ENCODE measurements at regions of chr2 and their contacts with region 1.

Region 1: DNA sequence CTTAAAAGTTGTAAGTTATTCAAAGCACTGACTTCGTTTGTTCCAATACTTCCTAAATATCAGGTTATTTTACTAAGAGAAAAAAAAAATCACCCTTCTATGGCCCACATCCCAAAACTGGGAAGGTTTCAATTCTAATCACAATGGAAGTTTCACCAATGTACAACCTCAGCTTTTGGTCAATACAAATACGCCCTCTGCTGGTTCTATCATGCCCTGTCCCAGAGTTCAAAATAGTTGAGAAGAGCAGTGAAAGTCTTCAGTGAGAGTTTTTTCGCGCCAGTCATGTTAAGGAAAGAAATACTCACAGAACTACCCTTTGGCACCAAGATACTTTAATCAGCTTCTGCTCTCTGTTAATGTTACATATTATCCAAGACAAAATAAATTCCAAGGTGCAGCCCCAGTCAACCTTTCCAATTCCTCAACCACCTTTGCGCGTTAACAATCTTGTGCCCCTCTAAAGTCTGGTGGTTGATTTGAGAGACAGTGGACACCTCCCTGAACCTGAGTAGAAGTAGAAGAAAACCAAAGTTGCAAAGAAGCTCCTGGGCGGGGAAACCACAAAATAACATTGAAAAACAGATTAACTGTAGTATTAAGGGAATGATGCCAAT is 59.9 kb downstream of the SUMO1 start:
- DNase-seq: peak; percentile 50
- ATAC-seq: peak; percentile 94
- H3K4me3 ChIP-seq: no peak overlapping the region
- H3K27ac ChIP-seq: no peak overlapping the region
- H3K4me1 ChIP-seq: no peaks in the 10 kb centered on the region
- H3K27me3 ChIP-seq: no peaks in the 10 kb centered on the region
- CTCF ChIP-seq: peak; percentile 77 to 92 (median 89)
- POLR2A ChIP-seq: no peak
- RAD21 ChIP-seq: peak; percentile 93

Region 2: DNA sequence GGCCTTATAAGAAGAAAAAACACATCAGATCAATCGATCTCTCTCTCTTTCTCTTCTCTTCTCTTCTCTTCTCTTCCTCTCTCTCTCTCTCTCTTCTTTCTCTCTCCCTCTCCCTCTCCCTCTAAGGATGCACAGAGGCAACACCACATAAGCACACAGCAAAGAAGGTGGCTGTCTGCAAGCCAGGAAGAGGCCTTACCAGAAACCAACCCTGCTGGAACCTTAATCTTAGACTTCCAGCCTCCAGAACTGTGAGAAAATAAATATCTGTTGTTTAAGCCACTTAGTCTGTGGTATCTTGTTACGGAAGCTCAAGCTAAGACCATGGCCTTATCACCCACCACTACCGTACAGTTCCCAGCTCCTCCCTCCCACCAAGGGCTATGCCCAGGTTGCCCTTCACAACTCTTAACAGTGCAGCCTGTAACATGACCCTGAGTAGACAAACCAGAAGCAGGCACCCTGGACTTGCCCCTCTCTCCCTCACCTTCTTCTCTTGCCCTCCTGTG is 510.0 kb before region 1 on chr2:
- CTCF ChIA-PET with region 1: no interaction called
- POLR2A ChIA-PET with region 1: no interaction called
- RAD21 ChIA-PET with region 1: no interaction called
- intact Hi-C with region 1: loop called (anchors 5 kb)
- DNase-seq: no peak
- ATAC-seq: no peak
- H3K4me3 ChIP-seq: no peak overlapping the region
- H3K27ac ChIP-seq: no peak overlapping the region
- H3K4me1 ChIP-seq: no peaks in the 10 kb centered on the region
- H3K27me3 ChIP-seq: no peaks in the 10 kb centered on the region
- CTCF ChIP-seq: no peak
- POLR2A ChIP-seq: no peak
- RAD21 ChIP-seq: no peak

Region 3: DNA sequence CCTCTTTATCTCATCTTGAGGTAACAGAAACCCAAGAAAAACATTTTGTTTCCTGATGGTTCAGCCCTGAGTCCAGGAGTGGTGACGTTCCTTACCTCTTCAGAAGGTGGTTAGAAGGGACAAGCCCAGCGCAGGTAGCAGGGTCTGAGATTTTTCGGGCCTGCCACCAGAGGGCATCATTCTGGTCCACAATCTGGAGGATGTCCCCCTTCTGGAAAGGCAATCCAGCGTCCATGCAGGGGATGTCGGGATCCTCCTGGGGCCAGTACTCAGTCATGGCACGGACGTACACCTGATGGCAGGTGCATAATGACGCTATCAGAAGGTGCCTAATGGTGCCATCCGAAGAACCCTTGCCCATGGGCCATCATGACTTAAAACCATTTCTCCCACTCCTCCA is 497.7 kb before region 1 on chr2:
- CTCF ChIA-PET with region 1: no interaction called
- POLR2A ChIA-PET with region 1: no interaction called
- RAD21 ChIA-PET with region 1: no interaction called
- intact Hi-C with region 1: loop called (anchors 5 kb)
- DNase-seq: peak; percentile 60
- ATAC-seq: peak; percentile 100
- H3K4me3 ChIP-seq: no peak overlapping the region
- H3K27ac ChIP-seq: no peak overlapping the region
- H3K4me1 ChIP-seq: no peaks in the 10 kb centered on the region
- H3K27me3 ChIP-seq: no peaks in the 10 kb centered on the region
- CTCF ChIP-seq: peak; percentile 84 to 85 (median 85)
- POLR2A ChIP-seq: no peak
- RAD21 ChIP-seq: peak; percentile 51

Region 4: DNA sequence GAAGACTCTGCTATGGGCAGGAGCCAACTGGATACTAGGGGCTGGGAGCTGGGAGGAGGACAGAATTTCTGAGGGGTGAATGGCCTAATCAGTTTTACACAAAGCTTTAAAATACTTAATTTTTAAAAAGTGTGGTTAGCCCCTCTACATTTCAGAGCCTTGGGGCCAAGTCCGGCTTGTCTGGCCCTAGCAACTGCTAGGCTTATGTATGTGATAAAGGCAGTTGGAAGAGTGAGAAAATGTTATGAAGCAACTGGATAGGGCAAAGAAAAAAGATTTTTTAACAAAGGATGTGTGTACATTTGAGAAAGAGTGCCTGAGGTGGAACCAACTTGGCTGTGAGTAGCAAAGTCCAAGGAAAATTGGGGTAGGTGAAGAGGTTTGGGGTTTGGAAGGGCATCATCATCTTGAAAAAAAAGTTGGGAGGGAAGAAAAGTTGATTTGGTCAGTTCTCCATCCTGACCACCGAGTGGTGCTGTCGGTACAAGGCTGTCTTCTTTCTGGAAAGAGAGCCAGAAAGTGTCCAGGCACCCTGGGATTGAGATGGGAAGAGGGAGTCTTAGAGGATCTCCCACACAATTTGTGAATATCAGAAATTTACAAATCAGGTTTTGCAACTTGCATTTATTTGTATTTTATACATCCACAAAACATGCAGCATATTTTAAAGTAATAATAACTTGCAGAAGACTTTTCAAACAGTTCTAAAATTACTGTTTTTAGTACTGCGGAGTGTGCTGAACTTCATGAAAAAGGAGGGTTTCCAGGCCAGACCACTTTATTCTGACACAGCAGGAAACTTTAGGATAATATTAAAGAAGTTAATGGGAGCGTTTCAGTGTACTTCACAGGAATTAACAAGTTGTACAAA is 382.6 kb before region 1 on chr2:
- CTCF ChIA-PET with region 1: no interaction called
- POLR2A ChIA-PET with region 1: no interaction called
- RAD21 ChIA-PET with region 1: no interaction called
- intact Hi-C with region 1: loop called (anchors 1 kb)
- DNase-seq: peak; percentile 35
- ATAC-seq: peak; percentile 80
- H3K4me3 ChIP-seq: no peak overlapping the region
- H3K27ac ChIP-seq: no peak overlapping the region
- H3K4me1 ChIP-seq: peaks cover 0 to 20% of the 10 kb centered on the region in 2 experiments; a peak in 2 of 4 replicates
- H3K27me3 ChIP-seq: no peaks in the 10 kb centered on the region
- CTCF ChIP-seq: peak; percentile 60 to 73 (median 73); a peak in 5 of 6 replicates
- POLR2A ChIP-seq: no peak
- RAD21 ChIP-seq: peak; percentile 87

Region 5: GRCh38 chr2:201860636-201861066 is 317.8 kb before region 1 on chr2:
- CTCF ChIA-PET with region 1: interaction called, 19 read pairs
- POLR2A ChIA-PET with region 1: no interaction called
- RAD21 ChIA-PET with region 1: no interaction called
- intact Hi-C with region 1: loop called (anchors 1 kb)
- DNase-seq: peak; percentile 56
- ATAC-seq: peak; percentile 99
- H3K4me3 ChIP-seq: no peak overlapping the region
- H3K27ac ChIP-seq: no peak overlapping the region
- H3K4me1 ChIP-seq: peaks cover 0 to 4% of the 10 kb centered on the region in 2 experiments; a peak in 1 of 4 replicates
- H3K27me3 ChIP-seq: no peaks in the 10 kb centered on the region
- CTCF ChIP-seq: peak; percentile 80 to 82 (median 81)
- POLR2A ChIP-seq: no peak
- RAD21 ChIP-seq: peak; percentile 95

Region 6: DNA sequence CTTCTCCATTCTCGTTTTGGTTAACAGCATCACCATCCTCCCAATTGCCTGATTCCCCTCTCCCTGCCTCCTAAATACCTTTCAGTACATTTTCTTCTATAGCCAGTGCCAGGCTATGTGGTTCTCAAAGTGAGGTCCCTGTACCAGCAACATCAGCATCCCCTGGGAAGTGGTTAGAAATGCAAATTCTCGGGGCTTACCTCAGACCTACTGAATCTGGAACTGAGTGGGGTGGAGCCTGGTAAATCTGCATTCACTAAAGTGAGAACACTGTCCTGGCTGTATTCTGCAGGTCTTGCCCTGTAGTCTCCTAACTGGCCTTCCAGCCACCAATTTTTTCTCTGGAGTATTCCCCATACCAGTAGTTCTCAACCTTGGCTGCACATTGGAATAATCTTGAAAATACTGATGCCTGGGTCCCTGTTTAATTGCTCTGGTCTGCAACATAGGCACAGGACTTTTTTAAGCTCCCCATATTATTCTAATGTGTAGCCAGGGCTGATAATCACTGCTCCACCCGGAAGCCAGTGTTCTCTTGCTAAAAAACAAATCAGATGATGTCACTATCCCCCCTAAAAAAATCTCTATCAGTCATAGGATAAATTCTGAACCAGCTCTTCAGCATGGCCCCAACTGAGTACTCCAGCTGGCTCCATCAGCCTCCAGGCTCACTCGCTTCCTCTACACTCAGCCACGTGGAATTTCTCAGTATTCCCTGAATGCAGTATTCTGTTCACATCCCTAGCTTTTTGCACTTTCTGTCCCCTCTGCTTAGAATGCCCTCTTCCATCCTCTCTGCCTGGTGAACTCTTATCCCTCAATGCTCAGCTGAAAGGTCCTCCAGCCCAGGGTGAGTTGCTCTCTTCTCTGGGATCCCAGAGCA is 273.7 kb before region 1 on chr2:
- CTCF ChIA-PET with region 1: no interaction called
- POLR2A ChIA-PET with region 1: no interaction called
- RAD21 ChIA-PET with region 1: no interaction called
- intact Hi-C with region 1: no loop called
- DNase-seq: no peak
- ATAC-seq: no peak
- H3K4me3 ChIP-seq: no peak overlapping the region
- H3K27ac ChIP-seq: no peak overlapping the region
- H3K4me1 ChIP-seq: peaks cover 0 to 4% of the 10 kb centered on the region in 2 experiments; a peak in 1 of 4 replicates
- H3K27me3 ChIP-seq: no peaks in the 10 kb centered on the region
- CTCF ChIP-seq: no peak
- POLR2A ChIP-seq: no peak
- RAD21 ChIP-seq: no peak

Region 7: DNA sequence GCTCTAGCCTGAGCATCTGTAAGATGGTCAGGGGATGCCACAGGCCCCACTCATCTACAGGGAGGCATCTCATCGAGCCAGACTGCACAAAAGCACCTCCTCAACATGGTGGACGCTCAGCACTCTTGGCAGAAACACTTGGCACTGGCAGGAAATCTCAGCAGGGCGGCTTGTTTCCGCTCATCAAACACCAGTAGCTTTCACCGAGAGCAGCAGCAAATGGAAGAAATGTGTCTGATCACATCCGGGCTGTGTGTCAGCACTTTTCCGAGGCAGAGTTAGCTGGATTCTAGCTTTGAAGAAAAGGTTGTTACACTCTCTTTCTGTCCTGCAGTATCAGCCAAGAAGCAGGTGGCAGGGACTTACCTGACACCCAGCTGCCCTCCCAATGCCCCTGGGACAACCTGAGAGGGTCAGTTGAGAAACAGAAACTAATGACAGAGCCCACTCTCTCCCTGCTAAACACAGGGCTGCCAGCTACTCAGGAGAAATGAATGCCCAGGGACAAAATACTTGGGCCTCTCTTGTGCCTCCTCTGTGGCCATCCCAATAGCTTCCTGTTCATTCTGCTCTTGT is 213.7 kb before region 1 on chr2:
- CTCF ChIA-PET with region 1: no interaction called
- POLR2A ChIA-PET with region 1: interaction called, 4 read pairs
- RAD21 ChIA-PET with region 1: no interaction called
- intact Hi-C with region 1: loop called (anchors 1 kb)
- DNase-seq: no peak
- ATAC-seq: no peak
- H3K4me3 ChIP-seq: no peak overlapping the region
- H3K27ac ChIP-seq: no peak overlapping the region
- H3K4me1 ChIP-seq: no peaks in the 10 kb centered on the region
- H3K27me3 ChIP-seq: peaks cover 1% of the 10 kb centered on the region; the same call in 1 of the 2 replicates
- CTCF ChIP-seq: no peak
- POLR2A ChIP-seq: no peak
- RAD21 ChIP-seq: no peak

Region 8: GRCh38 chr2:202104278-202104870 is 74.1 kb before region 1 on chr2:
- CTCF ChIA-PET with region 1: no interaction called
- POLR2A ChIA-PET with region 1: no interaction called
- RAD21 ChIA-PET with region 1: no interaction called
- intact Hi-C with region 1: loop called (anchors 1 kb)
- DNase-seq: peak; percentile 40
- ATAC-seq: peak; percentile 98
- H3K4me3 ChIP-seq: no peak overlapping the region
- H3K27ac ChIP-seq: no peak overlapping the region
- H3K4me1 ChIP-seq: no peaks in the 10 kb centered on the region
- H3K27me3 ChIP-seq: no peaks in the 10 kb centered on the region
- CTCF ChIP-seq: peak; percentile 68 to 93 (median 92); a peak in 5 of 6 replicates
- POLR2A ChIP-seq: no peak
- RAD21 ChIP-seq: peak; percentile 70

Measured in HCT116 (cell line).